MCF 10A (cell line): ENCODE measurements at regions of chr1 and their contacts with region 1.

Region 1: DNA sequence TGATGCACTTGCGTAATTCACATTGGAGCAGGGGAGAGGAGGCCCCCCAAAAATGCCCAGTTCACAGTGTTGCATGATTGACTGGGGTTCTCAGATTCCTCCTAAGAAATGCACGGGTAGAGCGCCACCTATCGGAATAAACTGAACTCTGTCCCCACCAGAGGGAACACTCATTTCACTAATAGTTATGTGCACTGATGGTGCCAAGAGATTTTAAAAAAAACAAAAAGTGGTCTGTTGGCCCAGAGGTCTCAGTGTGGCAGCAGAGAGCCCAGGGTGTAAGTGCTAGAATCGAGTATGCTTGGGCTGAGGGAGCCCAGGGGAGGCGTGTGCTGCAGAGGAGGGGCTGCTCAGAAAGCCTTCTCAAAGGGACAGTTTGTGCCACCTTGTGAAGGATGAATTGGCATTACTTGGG is 6.9 kb downstream of the PINK1 start:
- DNase-seq: peak; percentile 66
- H3K4me3 Mint-ChIP-seq: no peak overlapping the region
- H3K27ac Mint-ChIP-seq: no peak overlapping the region
- H3K4me1 Mint-ChIP-seq: peaks cover 6% of the 10 kb centered on the region
- H3K27me3 Mint-ChIP-seq: no peaks in the 10 kb centered on the region
- CTCF ChIP-seq: peak; percentile 72

Region 2: DNA sequence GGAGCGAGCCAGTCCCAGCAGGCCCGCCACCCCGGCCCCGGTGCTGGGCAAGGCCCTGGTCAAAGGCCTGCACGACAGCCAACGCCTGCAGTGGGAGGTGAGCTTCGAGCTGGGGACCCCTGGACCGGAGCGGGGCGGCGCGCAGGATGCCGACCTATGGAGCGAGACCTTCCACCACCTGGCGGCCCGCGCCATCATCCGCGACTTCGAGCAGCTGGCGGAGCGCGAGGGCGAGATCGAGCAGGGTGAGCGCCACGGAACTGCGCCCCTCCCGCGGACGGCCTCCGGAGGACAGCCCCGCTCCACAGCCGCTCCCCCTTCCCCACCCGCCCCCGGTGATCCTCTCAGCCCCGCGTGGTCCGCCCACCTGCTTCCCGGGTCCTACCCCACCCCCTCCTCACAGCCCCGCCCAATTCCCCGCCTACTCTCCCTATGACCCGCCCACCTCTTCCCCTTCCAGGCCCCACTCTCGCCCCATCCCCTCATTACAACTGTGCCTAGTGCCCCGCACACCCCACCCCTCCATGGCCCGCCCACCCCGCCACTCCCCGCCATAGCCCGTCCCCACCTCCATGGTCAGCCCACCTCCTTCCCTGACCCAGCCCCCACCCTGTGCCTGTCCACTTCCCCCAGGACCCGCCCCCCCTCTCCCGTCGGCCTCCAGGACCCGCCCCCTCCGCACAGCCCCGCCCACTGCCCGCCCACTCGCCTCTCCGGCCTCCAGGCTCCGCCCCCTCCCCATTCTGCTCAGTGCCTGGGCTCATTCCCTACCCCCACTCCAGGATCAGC is 296.8 kb before region 1 on chr1:
- CTCF ChIA-PET with region 1: no interaction called
- POLR2A ChIA-PET with region 1: no interaction called
- intact Hi-C with region 1: no loop called
- DNase-seq: no peak
- H3K4me3 Mint-ChIP-seq: no peak overlapping the region
- H3K27ac Mint-ChIP-seq: no peak overlapping the region
- H3K4me1 Mint-ChIP-seq: no peaks in the 10 kb centered on the region
- H3K27me3 Mint-ChIP-seq: no peaks in the 10 kb centered on the region
- CTCF ChIP-seq: no peak

Region 3: GRCh38 chr1:20521960-20522861 is 118.0 kb before region 1 on chr1:
- CTCF ChIA-PET with region 1: interaction called, 61 read pairs
- POLR2A ChIA-PET with region 1: no interaction called
- intact Hi-C with region 1: loop called (anchors 1 kb)
- DNase-seq: peak; percentile 83
- H3K4me3 Mint-ChIP-seq: peak overlapping the region; percentile 36
- H3K27ac Mint-ChIP-seq: no peak overlapping the region
- H3K4me1 Mint-ChIP-seq: no peaks in the 10 kb centered on the region
- H3K27me3 Mint-ChIP-seq: no peaks in the 10 kb centered on the region
- CTCF ChIP-seq: peak; percentile 83

Region 4: DNA sequence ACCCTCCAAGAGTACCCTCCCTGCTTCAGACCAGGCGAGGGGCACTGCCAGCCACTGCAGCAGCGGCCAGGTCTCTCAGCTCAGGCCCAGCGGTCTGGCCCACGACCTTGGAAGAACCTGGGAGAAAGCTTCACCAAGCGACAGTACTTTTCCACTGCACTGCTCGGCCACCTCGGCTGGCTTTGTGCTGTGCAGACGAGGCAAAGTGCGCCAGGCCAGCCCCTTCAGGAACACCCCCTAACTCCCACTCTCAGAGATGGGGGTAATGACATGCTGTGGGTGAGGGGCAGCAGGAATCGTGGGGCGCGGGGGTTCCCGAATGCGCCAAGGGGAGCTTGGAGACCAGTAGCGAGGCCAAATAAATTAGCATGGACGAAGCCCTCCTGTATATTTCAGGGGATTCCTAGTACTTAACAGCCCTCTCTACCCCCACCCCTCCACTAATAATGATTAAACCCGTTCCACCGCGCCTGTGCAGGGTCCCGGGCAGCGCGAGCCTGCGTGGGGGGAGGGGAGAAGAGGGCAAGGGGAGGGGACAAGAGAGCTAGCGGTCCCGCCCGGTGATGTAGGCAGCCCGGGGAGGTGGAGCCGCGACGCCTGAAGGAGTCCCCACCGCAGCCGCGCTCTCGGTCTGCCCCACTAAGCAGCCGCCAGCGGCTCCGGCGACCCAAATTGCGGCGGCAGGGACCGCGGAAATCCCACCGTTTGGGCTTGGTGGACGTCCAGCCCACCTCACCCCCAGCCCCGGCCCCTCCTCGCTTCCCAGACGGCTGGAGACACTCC is 88.1 kb before region 1 on chr1 and contains the start of gene FAM43B:
- CTCF ChIA-PET with region 1: no interaction called
- POLR2A ChIA-PET with region 1: no interaction called
- intact Hi-C with region 1: no loop called
- DNase-seq: no peak
- H3K4me3 Mint-ChIP-seq: no peak within 1 kb of the TSS
- H3K27ac Mint-ChIP-seq: no peak within 1 kb of the TSS
- H3K4me1 Mint-ChIP-seq: no peaks in the 10 kb centered on the region
- H3K27me3 Mint-ChIP-seq: peaks cover 9% of the 10 kb centered on the region
- CTCF ChIP-seq: no peak
- total RNA-seq, gene FAM43B: not detected in 2 replicates

Region 5: DNA sequence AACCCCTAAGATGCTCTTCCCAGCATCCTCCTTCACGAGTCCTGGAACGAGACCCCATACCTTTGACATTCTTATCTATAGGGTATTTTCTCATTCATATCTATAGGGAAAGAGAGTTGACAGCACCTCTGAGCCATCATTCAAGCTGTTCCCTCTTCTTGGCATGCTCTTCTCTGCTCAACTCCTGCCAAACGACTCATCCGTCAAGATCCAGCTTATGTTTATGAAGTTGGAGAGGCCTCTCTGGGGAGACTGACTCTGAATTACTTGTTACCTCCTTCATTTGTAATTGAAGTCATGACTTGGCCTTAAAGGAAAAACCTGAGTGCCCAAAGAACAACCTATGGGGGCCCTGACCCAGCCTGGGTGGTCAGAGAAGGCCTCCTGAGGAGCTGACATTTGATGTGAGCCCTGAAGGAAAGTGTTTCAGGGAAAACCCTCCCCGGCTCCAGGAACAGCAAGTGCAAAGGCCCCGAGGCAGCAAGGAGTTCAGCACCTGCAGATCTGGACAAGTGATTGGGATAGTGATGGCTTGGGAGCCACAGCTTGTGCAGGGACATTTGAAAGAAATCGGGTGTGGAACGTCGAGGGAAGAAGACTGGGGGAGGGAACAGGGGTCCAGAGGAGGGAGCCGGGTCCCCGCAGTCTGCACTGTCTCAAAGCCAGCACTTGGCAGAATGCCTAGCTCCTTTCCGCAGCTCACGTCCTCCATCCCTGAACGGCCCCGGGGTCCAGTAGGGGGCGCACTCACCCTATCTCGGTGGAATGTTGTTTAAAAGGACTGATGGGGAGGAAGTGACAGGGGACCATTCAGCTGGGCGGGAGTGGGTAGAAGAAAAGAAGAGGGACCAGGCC is 65.3 kb before region 1 on chr1:
- CTCF ChIA-PET with region 1: interaction called, 10 read pairs
- POLR2A ChIA-PET with region 1: no interaction called
- intact Hi-C with region 1: loop called (anchors 1 kb)
- DNase-seq: peak; percentile 91
- H3K4me3 Mint-ChIP-seq: no peak overlapping the region
- H3K27ac Mint-ChIP-seq: no peak overlapping the region
- H3K4me1 Mint-ChIP-seq: no peaks in the 10 kb centered on the region
- H3K27me3 Mint-ChIP-seq: peaks cover 14% of the 10 kb centered on the region
- CTCF ChIP-seq: peak; percentile 76

Region 6: DNA sequence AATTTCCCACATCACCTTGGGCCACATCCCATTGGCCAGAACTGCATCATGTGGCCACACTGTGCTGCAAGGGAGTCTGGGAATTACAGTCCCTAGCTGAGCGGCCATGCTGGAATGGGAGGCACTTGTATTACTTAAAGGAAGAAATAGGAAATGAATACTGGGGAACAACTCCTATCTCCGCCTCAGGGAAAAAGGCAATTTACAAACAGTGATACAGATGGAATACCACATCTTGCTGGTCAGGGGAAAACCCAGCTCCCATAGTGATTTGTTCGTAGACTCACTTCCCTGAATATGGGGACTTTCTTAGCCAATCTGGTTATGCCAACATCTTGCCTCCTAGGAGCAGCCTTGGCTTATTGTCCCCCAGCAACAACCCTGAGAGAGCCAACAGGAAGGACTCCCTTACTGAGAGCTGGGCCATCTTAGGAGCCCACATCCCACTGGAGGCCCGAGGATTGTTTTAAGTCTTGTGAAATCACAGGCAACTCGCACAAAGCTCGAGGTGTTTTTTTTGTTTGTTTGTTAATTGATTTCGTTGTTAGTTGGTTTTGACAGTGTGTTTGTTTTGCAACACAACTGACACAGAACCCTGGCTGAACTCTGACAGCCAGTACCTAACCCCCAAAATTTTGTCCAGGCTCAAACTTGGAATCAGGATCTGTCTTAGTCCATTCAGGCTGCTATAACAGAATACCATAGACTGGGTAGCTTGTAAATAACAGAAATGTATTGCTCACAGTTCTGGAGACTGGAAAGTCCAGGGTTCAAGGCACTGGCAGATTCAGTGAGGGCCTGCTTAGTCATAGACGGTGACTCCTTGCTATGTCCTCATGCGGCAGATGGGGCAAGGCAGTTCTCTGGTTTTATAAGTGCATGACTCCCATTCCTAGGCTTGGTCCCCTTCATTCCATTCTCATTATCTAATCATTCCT is 36.4 kb before region 1 on chr1:
- CTCF ChIA-PET with region 1: no interaction called
- POLR2A ChIA-PET with region 1: no interaction called
- intact Hi-C with region 1: no loop called
- DNase-seq: peak; percentile 85
- H3K4me3 Mint-ChIP-seq: no peak overlapping the region
- H3K27ac Mint-ChIP-seq: peak overlapping the region; percentile 68
- H3K4me1 Mint-ChIP-seq: peaks cover 44% of the 10 kb centered on the region
- H3K27me3 Mint-ChIP-seq: no peaks in the 10 kb centered on the region
- CTCF ChIP-seq: no peak

Region 7: GRCh38 chr1:20767271-20767670 is 127.1 kb after region 1 on chr1:
- CTCF ChIA-PET with region 1: no interaction called
- POLR2A ChIA-PET with region 1: no interaction called
- intact Hi-C with region 1: no loop called
- DNase-seq: no peak
- H3K4me3 Mint-ChIP-seq: no peak overlapping the region
- H3K27ac Mint-ChIP-seq: no peak overlapping the region
- H3K4me1 Mint-ChIP-seq: no peaks in the 10 kb centered on the region
- H3K27me3 Mint-ChIP-seq: no peaks in the 10 kb centered on the region
- CTCF ChIP-seq: no peak